HEK293 (cell line): ENCODE measurements at regions of chr19 and their contacts with region 1.

Region 1: GRCh38 chr19:50300814-50301606 is 28.2 kb downstream of the KCNC3 start:
- H3K4me3 ChIP-seq: no peak overlapping the region
- H3K27ac ChIP-seq: no peak overlapping the region
- H3K4me1 ChIP-seq: 0 out of 2 replicates have a peak, but pooled peaks cover 3% of the 10 kb centered on the region
- CTCF ChIP-seq: no peak

Region 2: GRCh38 chr19:50280074-50280473 is 20.9 kb before region 1 on chr19:
- CTCF ChIA-PET with region 1: no interaction called
- POLR2A ChIA-PET with region 1: no interaction called
- H3K4me3 ChIP-seq: no peak overlapping the region
- H3K27ac ChIP-seq: no peak overlapping the region
- H3K4me1 ChIP-seq: no peaks in the 10 kb centered on the region
- CTCF ChIP-seq: no peak

Region 3: GRCh38 chr19:50329146-50329925 is 28.3 kb after region 1 on chr19 and contains the start of gene KCNC3:
- CTCF ChIA-PET with region 1: interaction called, 11 read pairs
- POLR2A ChIA-PET with region 1: no interaction called
- H3K4me3 ChIP-seq: peak within 1 kb of the TSS; percentile 25
- H3K27ac ChIP-seq: peak within 1 kb of the TSS; percentile 66
- H3K4me1 ChIP-seq: peaks cover 16% of the 10 kb centered on the region
- CTCF ChIP-seq: no peak